CD8-positive, alpha-beta T cell (primary cell): ENCODE measurements at regions of chr19 and their contacts with region 1.

Region 1: DNA sequence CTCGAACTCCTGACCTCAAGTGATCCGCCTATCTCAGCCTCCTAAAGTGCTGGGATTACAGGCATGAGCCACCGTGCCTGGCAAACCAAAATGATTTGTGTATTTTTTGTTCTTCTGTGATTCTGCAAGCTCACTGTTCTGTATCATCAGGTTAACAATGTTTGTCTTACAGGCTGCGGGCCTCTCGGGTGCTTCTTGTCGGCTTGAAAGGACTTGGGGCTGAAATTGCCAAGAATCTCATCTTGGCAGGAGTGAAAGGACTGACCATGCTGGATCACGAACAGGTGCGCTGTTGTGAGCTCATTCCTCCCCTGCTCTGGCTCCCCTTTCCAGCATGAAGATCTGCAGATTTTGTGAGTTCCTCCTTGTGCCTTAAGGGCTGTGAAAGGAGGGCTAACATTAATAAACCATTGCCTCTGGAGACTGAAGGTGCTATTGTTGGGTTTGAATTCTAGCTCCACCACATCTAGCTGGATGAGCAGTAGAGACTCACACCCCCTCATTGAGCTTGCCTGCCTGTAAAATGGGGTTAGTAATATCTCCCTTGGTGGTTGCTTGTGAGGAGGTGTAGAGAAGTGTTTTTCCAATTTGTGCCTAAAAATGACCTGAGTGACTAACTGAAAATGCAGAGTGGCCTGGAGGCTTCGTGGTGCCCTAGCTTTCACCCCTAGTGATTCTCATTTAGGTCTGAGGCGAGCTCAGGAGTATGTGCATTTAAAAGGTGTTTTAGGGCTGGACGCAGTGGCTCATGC is 12.9 kb downstream of the SAE1 start:
- DNase-seq: no peak
- ATAC-seq: no peak
- H3K4me3 ChIP-seq: no peak overlapping the region
- H3K4me3 Mint-ChIP-seq: no peak overlapping the region
- H3K27ac ChIP-seq: no peak overlapping the region
- H3K27ac Mint-ChIP-seq: no peak overlapping the region
- H3K4me1 ChIP-seq: peaks cover 35% of the 10 kb centered on the region
- H3K4me1 Mint-ChIP-seq: peaks cover 56% of the 10 kb centered on the region
- H3K27me3 ChIP-seq: no peaks in the 10 kb centered on the region
- H3K27me3 Mint-ChIP-seq: no peaks in the 10 kb centered on the region
- CTCF ChIP-seq: no peak

Region 2: DNA sequence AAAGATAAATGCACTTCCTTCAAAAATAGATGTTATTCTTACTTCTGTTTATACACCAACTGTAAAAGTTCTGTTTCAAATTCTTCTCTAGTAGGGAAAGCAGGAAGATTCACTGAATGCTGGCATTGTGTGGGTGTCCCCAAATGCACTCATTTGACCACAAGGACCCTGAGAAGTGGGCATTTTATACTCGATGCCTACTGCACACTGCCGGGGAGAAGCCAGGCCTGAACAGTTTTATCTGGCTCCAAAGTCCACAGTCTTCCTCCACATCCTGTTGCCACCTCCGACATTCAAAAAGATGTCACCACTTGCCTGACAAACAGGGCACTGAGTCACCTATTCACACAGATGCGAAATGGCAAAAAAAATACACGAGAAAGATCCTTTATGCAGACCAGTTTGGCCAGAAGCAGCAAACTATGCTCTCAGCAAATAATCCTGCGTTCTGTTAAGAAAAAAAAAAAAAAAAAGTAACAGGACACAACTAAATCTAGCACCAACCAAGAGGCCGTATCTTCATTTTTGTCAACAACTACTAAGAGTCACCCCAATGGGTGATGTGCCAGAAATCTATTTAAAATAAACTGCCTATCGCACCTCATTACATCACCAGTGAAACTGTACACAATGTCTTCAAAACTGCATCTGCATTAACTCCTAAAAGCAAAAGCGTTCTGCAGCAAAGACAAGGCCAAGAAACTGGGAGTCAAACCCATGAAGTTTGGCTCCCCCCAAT is 36.1 kb before region 1 on chr19:
- CTCF ChIA-PET with region 1: no interaction called
- POLR2A ChIA-PET with region 1: no interaction called
- intact Hi-C with region 1: no loop called
- DNase-seq: peak in 8 of 9 experiments; percentile 29 to 71 (median 48)
- ATAC-seq: peak; percentile 32
- H3K4me3 ChIP-seq: no peak overlapping the region
- H3K4me3 Mint-ChIP-seq: peak overlapping the region; percentile 36
- H3K27ac ChIP-seq: peak overlapping the region; percentile 30 to 99
- H3K27ac Mint-ChIP-seq: peak overlapping the region; percentile 83
- H3K4me1 ChIP-seq: peaks cover 43% of the 10 kb centered on the region
- H3K4me1 Mint-ChIP-seq: peaks cover 68% of the 10 kb centered on the region
- H3K27me3 ChIP-seq: no peaks in the 10 kb centered on the region
- H3K27me3 Mint-ChIP-seq: no peaks in the 10 kb centered on the region
- CTCF ChIP-seq: no peak

Region 3: GRCh38 chr19:47130591-47131227 is 12.8 kb before region 1 on chr19 and contains the start of gene SAE1:
- CTCF ChIA-PET with region 1: interaction called, 14 read pairs
- POLR2A ChIA-PET with region 1: interaction called, 5 read pairs
- intact Hi-C with region 1: loop called in 1 of 2 experiments (anchors 1 kb)
- DNase-seq: peak; percentile 85 to 95 (median 88)
- ATAC-seq: peak; percentile 88
- H3K4me3 ChIP-seq: peak within 1 kb of the TSS; percentile 91 to 99
- H3K4me3 Mint-ChIP-seq: peak within 1 kb of the TSS; percentile 99
- H3K27ac ChIP-seq: peak within 1 kb of the TSS; percentile 59 to 86
- H3K27ac Mint-ChIP-seq: peak within 1 kb of the TSS; percentile 91
- H3K4me1 ChIP-seq: peaks cover 37% of the 10 kb centered on the region
- H3K4me1 Mint-ChIP-seq: peaks cover 47% of the 10 kb centered on the region
- H3K27me3 ChIP-seq: no peaks in the 10 kb centered on the region
- H3K27me3 Mint-ChIP-seq: no peaks in the 10 kb centered on the region
- CTCF ChIP-seq: peak; percentile 67
- total RNA-seq, gene SAE1: 22.4 TPM

Region 4: DNA sequence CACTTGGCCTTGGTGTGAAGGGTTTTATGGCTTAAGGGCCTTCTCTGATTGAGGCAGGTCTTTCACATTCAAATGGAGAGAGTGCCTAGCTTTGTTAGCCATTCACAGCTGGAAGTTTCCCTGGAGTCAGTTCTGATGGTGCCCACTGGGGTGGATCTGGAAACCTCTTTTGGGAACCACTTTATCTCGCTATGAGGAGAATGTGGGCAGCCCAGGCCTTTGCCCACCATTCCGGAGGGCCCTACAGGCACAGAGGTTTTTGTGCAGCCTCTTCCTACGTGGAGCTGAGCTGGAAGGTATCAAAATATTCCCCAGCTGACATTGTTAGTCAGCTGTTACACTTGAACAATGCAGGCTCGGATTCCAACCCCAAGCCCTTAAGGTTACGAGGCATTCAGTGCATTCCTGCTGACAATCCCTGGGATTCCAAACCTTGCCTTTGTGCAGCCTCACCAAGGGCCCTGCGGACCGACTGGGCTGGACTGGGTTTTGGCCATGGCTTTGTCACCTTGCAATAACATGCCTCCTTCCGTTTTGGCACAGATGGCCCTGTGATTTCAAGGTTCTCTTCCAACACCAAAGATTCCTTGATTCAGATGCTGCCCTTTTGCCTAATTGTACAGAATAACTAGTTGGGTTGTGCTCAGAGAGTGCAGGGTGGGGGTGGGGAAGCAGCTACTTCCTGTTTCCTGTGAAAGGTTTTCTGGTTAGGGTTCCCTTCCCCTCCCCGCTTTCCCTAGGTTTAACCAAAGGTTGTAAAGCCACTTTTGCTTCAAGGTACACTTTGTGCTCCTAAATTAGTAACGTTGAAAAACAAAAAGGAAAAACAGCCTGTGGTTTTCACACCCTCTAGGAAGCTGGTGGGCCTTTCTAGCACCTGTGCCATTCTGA is 14.2 kb after region 1 on chr19:
- CTCF ChIA-PET with region 1: interaction called, 31 read pairs
- POLR2A ChIA-PET with region 1: interaction called, 15 read pairs
- intact Hi-C with region 1: no loop called
- DNase-seq: peak in 6 of 9 experiments; percentile 37 to 80 (median 64)
- ATAC-seq: peak; percentile 22
- H3K4me3 ChIP-seq: peak overlapping the region; percentile 14 to 42
- H3K4me3 Mint-ChIP-seq: peak overlapping the region; percentile 74
- H3K27ac ChIP-seq: peak overlapping the region; percentile 41 to 48
- H3K27ac Mint-ChIP-seq: peak overlapping the region; percentile 95
- H3K4me1 ChIP-seq: peaks cover 61% of the 10 kb centered on the region
- H3K4me1 Mint-ChIP-seq: peaks cover 73% of the 10 kb centered on the region
- H3K27me3 ChIP-seq: no peaks in the 10 kb centered on the region
- H3K27me3 Mint-ChIP-seq: no peaks in the 10 kb centered on the region
- CTCF ChIP-seq: no peak

Region 5: GRCh38 chr19:47190167-47190727 is 46.7 kb after region 1 on chr19:
- CTCF ChIA-PET with region 1: interaction called, 24 read pairs
- POLR2A ChIA-PET with region 1: interaction called, 11 read pairs
- intact Hi-C with region 1: loop called (anchors 2 kb)
- DNase-seq: peak in 8 of 9 experiments; percentile 18 to 80 (median 59)
- ATAC-seq: peak; percentile 39
- H3K4me3 ChIP-seq: no peak overlapping the region
- H3K4me3 Mint-ChIP-seq: peak overlapping the region; percentile 38
- H3K27ac ChIP-seq: peak overlapping the region in 1 of 2 experiments; percentile 9
- H3K27ac Mint-ChIP-seq: peak overlapping the region; percentile 94
- H3K4me1 ChIP-seq: peaks cover 70% of the 10 kb centered on the region
- H3K4me1 Mint-ChIP-seq: peaks cover 65% of the 10 kb centered on the region
- H3K27me3 ChIP-seq: no peaks in the 10 kb centered on the region
- H3K27me3 Mint-ChIP-seq: no peaks in the 10 kb centered on the region
- CTCF ChIP-seq: no peak

Region 6: DNA sequence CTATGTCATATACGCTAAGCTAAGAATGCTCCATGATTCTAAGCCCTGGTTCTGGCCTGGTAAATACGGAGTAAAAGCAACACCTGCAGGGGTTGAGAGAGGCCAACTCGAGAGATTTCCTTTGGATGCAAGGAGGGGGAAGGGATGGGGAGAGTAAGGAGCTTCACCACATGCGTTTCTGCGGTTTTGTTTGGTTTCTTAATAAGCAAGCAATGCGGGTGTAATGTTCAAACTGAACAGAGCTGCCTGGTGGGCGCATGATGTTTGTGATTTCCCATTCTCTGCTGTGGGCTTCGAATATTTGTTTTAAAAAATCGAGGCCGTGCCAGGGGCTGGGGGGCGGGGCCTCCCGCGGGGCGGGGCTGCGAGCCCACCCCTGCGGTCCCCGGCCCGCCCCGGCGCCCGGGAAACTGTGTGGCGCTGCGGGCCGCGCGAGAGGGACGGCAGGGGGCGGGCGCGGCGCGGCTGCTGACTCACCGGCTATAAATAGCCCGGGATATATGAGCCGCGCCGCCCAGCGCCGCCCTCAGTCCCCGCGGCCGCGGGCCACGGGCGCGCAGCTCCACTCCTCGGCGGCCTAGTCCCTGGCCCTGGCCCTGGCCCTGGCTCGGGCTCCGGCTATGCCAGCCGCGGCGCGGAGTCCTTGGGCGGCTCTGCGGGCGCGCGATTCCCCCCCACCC is 82.4 kb after region 1 on chr19:
- CTCF ChIA-PET with region 1: interaction called, 15 read pairs
- POLR2A ChIA-PET with region 1: interaction called, 11 read pairs
- intact Hi-C with region 1: no loop called
- DNase-seq: peak; percentile 80 to 95 (median 86)
- ATAC-seq: peak; percentile 47
- H3K4me3 ChIP-seq: peak overlapping the region; percentile 48 to 68
- H3K4me3 Mint-ChIP-seq: peak overlapping the region; percentile 81
- H3K27ac ChIP-seq: peak overlapping the region; percentile 73 to 89
- H3K27ac Mint-ChIP-seq: peak overlapping the region; percentile 92
- H3K4me1 ChIP-seq: peaks cover 40% of the 10 kb centered on the region
- H3K4me1 Mint-ChIP-seq: peaks cover 16% of the 10 kb centered on the region
- H3K27me3 ChIP-seq: no peaks in the 10 kb centered on the region
- H3K27me3 Mint-ChIP-seq: no peaks in the 10 kb centered on the region
- CTCF ChIP-seq: peak; percentile 51

Region 7: DNA sequence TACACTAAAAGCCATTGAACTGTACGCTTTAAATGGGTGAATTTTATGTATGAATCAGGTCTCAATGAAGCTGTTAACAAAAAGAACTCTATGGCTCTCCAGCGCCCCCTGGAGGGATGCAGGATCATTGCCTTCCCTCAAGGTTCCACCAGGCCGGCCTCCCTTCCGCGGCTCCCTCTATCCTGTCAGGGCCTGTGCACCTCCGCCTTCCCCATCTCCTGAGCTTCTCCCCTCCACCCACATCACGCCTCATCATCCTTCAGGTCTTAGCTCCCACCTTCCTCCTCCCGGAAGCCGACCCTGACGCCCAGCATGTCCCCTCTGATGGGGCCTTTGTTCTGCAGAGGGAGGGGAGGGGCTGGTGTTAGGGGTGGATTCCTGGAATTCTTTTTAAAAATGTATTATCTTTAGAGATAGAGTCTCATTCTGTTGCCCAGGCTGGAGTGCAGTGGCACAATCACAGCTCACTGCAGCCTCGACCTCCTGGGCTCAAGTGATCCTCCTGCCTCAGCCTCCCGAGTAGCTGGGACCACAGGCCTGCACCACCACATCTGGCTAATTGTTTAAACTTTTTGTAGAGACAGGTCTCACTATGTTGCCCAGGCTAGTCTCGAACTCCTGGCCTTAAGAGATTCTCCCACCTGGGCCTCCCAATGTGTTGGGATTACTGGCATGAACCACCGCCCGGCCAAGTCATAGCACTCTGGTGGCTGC is 248.2 kb after region 1 on chr19:
- CTCF ChIA-PET with region 1: no interaction called
- POLR2A ChIA-PET with region 1: no interaction called
- intact Hi-C with region 1: loop called in 1 of 2 experiments (anchors 5 kb)
- DNase-seq: peak; percentile 69 to 89 (median 81)
- ATAC-seq: peak; percentile 79
- H3K4me3 ChIP-seq: no peak overlapping the region
- H3K4me3 Mint-ChIP-seq: no peak overlapping the region
- H3K27ac ChIP-seq: no peak overlapping the region
- H3K27ac Mint-ChIP-seq: no peak overlapping the region
- H3K4me1 ChIP-seq: no peaks in the 10 kb centered on the region
- H3K4me1 Mint-ChIP-seq: peaks cover 4% of the 10 kb centered on the region
- H3K27me3 ChIP-seq: peaks cover 0 to 3% of the 10 kb centered on the region in 2 experiments
- H3K27me3 Mint-ChIP-seq: peaks cover 22% of the 10 kb centered on the region
- CTCF ChIP-seq: peak; percentile 88